ENCODE measurements at regions of chr6 and their contacts with region 1.

Region 1: GRCh38 chr6:42338663-42339218 is 113.0 kb downstream of the TRERF1 start:
- DNase-seq: peak; percentile 52
- H3K4me3 Mint-ChIP-seq: peak overlapping the region; percentile 47
- H3K27ac Mint-ChIP-seq: peak overlapping the region; percentile 84
- H3K4me1 Mint-ChIP-seq: peaks cover 79% of the 10 kb centered on the region
- H3K27me3 Mint-ChIP-seq: no peaks in the 10 kb centered on the region

Region 2: DNA sequence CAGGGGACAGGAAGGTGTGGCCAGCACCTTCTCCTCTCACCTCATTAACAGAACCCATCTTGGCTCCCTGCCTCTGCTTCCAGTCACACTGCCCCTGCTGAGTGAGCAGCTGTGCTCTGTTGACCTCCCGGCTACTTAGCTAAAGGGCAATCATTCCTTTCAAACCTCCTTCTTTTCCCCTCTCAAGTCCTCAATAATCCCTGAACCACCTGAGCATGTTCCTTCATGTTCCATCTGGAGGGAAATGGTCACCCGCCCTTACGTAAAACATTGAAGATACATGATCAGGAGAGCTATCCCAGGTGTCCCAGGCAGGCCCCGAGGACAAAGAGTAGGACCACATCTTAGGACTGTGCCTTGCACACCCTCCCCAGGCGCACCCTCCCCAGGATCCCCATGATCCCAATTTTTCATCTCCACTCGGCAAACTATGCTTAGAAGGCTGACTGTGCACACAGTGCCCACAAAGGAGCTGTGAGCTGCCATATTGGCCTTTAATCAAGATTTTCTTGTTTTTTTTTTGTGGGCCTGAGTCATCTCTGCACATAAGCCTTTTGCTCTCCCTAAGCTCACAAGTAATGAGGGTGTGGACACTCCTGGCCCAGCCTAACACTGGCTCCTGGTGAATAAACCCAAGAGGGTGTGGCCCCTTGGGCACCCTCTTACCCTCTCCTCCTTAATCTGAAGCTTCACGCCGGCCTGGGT is 99.2 kb before region 1 on chr6:
- CTCF ChIA-PET with region 1: no interaction called
- POLR2A ChIA-PET with region 1: no interaction called
- intact Hi-C with region 1: loop called (anchors 5 kb)
- DNase-seq: no peak
- H3K4me3 Mint-ChIP-seq: no peak overlapping the region
- H3K27ac Mint-ChIP-seq: peak overlapping the region; percentile 44
- H3K4me1 Mint-ChIP-seq: peaks cover 17% of the 10 kb centered on the region
- H3K27me3 Mint-ChIP-seq: no peaks in the 10 kb centered on the region

Region 3: DNA sequence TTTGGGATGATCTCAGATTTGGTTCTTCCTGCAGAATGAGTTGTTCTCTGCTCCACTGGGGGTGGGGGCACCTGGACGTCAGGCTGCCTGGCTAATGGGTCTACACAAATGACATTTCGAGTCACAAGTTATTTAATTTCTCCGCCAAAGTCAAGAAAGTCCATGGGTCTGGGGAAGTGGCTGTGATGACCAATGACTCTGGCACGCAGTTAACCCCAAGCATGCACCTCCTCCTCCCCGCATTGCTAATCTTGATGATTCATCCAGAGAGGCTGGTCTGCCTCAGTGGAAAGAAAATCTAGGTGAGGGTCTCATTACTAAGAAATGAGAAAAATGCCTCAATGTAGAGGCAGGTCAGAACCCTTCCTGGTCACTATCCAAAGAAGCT is 22.8 kb before region 1 on chr6:
- CTCF ChIA-PET with region 1: interaction called, 5 read pairs
- POLR2A ChIA-PET with region 1: interaction called, 3 read pairs
- intact Hi-C with region 1: loop called (anchors 1 kb)
- DNase-seq: peak; percentile 71
- H3K4me3 Mint-ChIP-seq: no peak overlapping the region
- H3K27ac Mint-ChIP-seq: peak overlapping the region; percentile 80
- H3K4me1 Mint-ChIP-seq: peaks cover 65% of the 10 kb centered on the region
- H3K27me3 Mint-ChIP-seq: no peaks in the 10 kb centered on the region

Region 4: GRCh38 chr6:42367353-42368011 is 28.7 kb after region 1 on chr6:
- CTCF ChIA-PET with region 1: no interaction called
- POLR2A ChIA-PET with region 1: interaction called, 14 read pairs
- intact Hi-C with region 1: loop called (anchors 1 kb)
- DNase-seq: peak; percentile 48
- H3K4me3 Mint-ChIP-seq: peak overlapping the region; percentile 67
- H3K27ac Mint-ChIP-seq: peak overlapping the region; percentile 92
- H3K4me1 Mint-ChIP-seq: peaks cover 73% of the 10 kb centered on the region
- H3K27me3 Mint-ChIP-seq: no peaks in the 10 kb centered on the region

Region 5: GRCh38 chr6:42453031-42453653 is 114.4 kb after region 1 on chr6:
- CTCF ChIA-PET with region 1: no interaction called
- POLR2A ChIA-PET with region 1: interaction called, 3 read pairs
- intact Hi-C with region 1: loop called (anchors 1 kb)
- DNase-seq: peak; percentile 86
- H3K4me3 Mint-ChIP-seq: peak overlapping the region; percentile 98
- H3K27ac Mint-ChIP-seq: no peak overlapping the region
- H3K4me1 Mint-ChIP-seq: peaks cover 23% of the 10 kb centered on the region
- H3K27me3 Mint-ChIP-seq: no peaks in the 10 kb centered on the region

Measured in activated CD4-positive, alpha-beta memory T cell treated with anti-CD3 and anti-CD28 coated beads for 36 hours (primary cell).